Activated B cell treated with CpG ODN at 0.5 μM for 24 hours (primary cell): ENCODE measurements at regions of chr1 and their contacts with region 1.

Region 1: DNA sequence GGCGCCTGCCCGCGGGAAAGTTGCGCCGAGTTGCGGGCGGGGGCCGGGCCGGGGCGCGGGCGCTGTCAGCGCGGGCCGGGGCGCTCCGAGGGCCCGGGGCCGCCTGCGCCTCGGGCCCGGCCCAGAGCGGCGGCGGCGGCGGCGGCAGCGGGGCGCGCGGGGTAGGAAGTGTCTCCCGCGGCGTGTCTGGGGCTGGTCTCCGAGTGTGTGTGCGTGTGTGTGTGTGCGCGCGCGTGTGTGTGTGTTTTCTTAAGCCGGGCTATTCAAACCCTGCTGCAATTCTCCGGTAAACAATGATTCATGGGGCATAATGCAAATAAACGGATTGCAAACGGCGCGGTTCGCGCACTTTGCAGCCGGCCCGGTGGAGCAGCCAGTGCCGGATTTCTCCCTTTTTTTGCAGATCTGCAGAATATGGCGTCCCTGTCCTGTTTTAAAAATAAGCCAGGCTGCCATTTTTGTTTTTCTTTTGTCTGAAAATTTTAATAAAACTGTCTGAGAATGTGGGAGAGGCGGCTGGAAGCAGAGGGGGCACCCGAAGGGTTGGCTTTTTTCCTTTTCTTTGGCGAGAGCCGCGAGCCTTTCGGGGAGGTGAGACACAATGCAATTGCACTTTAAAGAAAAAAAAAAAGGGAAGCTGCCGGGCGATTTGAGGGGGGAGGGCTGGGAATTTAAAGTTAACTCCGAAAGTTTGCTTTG is 558 bp downstream of the ZNF362 start:
- DNase-seq: no peak
- ATAC-seq: peak; percentile 60
- H3K4me3 Mint-ChIP-seq: peak overlapping the region; percentile 97
- H3K27ac Mint-ChIP-seq: peak overlapping the region; percentile 95
- H3K4me1 Mint-ChIP-seq: peaks cover 34% of the 10 kb centered on the region
- H3K27me3 Mint-ChIP-seq: no peaks in the 10 kb centered on the region
- CTCF ChIP-seq: no peak

Region 2: DNA sequence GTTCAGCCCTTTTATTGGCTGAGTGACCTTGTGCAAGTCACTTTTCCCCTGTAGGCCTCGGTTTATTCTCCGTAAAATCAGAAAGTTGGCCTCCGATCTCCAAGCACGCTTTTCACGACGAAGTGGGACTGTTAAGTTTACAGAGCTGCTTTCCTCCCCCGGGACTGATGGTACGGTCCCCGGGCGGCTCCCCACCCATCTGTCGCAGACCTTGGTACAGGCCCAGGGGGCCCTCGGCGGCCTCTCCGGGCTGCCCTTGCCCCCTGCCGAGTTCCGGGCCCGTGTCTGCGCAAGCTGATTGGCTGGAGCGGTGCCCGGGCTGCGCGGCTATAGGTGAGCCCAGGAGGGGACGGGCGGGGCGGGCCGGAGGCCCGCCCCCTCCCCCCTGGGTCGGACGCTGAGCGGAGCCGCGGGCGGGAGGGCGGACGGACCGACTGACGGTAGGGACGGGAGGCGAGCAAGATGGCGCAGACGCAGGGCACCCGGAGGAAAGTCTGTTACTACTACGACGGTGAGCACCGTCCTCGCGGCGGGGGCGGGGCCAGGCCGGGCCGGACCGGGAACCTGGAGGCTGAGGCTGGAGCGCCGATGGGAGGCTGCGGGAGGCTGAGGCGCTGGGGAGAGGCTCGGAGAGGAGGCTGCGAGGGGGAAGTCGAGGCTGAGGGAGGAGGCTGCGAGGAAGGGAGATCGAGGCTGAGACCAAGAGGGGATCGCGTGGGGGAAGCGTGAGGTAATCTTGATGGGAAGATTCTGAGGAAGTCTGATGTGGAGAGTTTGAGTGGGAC is 965.0 kb before region 1 on chr1 and contains the start of gene HDAC1:
- CTCF ChIA-PET with region 1: no interaction called
- POLR2A ChIA-PET with region 1: no interaction called
- intact Hi-C with region 1: no loop called
- DNase-seq: peak; percentile 91
- ATAC-seq: peak; percentile 98
- H3K4me3 Mint-ChIP-seq: peak within 1 kb of the TSS; percentile 100
- H3K27ac Mint-ChIP-seq: peak within 1 kb of the TSS; percentile 98
- H3K4me1 Mint-ChIP-seq: peaks cover 48% of the 10 kb centered on the region
- H3K27me3 Mint-ChIP-seq: no peaks in the 10 kb centered on the region
- CTCF ChIP-seq: no peak
- total RNA-seq, gene HDAC1: 204 and 212 TPM in 2 replicates

Region 3: DNA sequence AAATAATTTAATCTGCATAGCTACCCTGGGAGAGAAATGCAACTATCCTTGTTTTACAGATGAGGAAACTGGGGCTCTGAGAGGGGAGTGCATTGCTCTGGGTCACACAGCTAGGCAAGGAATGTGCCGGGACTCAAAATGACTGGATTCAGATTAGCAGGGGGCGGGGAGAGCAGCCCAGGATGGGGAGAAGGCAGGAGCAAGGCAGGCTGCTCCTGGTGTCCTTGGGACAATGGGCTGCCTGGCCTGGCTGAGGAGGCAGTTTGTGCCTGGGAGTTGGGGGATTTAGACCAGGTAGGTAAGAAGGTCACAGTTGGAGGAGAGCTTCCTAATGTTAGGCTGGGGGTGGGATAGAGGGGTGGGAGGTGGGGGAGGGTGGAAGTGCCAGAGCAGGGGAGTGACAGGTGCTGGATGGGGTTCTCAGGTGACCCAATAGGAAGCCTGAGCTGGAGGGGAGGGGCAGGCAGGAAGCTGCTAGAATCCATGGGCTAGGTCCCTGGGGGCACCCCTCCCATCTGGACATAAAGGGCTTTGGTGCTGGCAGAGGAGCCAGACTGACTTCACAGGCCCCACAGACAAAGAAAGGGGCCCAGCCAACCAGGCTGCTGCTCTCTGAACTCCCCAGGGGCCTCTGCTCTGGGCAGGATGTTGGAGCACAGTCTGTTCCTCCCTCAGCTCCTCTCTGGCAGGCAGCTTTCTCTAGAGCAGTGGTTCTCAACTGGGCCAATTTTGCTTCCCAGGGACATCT is 104.0 kb before region 1 on chr1:
- CTCF ChIA-PET with region 1: no interaction called
- POLR2A ChIA-PET with region 1: no interaction called
- intact Hi-C with region 1: no loop called
- DNase-seq: no peak
- ATAC-seq: peak; percentile 50
- H3K4me3 Mint-ChIP-seq: no peak overlapping the region
- H3K27ac Mint-ChIP-seq: no peak overlapping the region
- H3K4me1 Mint-ChIP-seq: peaks cover 2% of the 10 kb centered on the region
- H3K27me3 Mint-ChIP-seq: no peaks in the 10 kb centered on the region
- CTCF ChIP-seq: no peak

Region 4: GRCh38 chr1:33181921-33182341 is 74.9 kb before region 1 on chr1 and contains the start of gene TRIM62:
- CTCF ChIA-PET with region 1: no interaction called
- POLR2A ChIA-PET with region 1: interaction called, 6 read pairs
- intact Hi-C with region 1: loop called (anchors 2 kb)
- DNase-seq: peak; percentile 80
- ATAC-seq: peak; percentile 67
- H3K4me3 Mint-ChIP-seq: peak within 1 kb of the TSS; percentile 89
- H3K27ac Mint-ChIP-seq: peak within 1 kb of the TSS; percentile 79
- H3K4me1 Mint-ChIP-seq: peaks cover 21% of the 10 kb centered on the region
- H3K27me3 Mint-ChIP-seq: peaks cover 9% of the 10 kb centered on the region
- CTCF ChIP-seq: no peak
- total RNA-seq, gene TRIM62: 10.1 and 10.9 TPM in 2 replicates

Region 5: GRCh38 chr1:33306648-33307493 is 50.0 kb after region 1 on chr1:
- CTCF ChIA-PET with region 1: no interaction called
- POLR2A ChIA-PET with region 1: no interaction called
- intact Hi-C with region 1: no loop called
- DNase-seq: no peak
- ATAC-seq: no peak
- H3K4me3 Mint-ChIP-seq: no peak overlapping the region
- H3K27ac Mint-ChIP-seq: no peak overlapping the region
- H3K4me1 Mint-ChIP-seq: peaks cover 4% of the 10 kb centered on the region
- H3K27me3 Mint-ChIP-seq: peaks cover 18% of the 10 kb centered on the region
- CTCF ChIP-seq: no peak

Region 6: GRCh38 chr1:33338440-33339211 is 81.8 kb after region 1 on chr1:
- CTCF ChIA-PET with region 1: no interaction called
- POLR2A ChIA-PET with region 1: no interaction called
- intact Hi-C with region 1: no loop called
- DNase-seq: no peak
- ATAC-seq: no peak
- H3K4me3 Mint-ChIP-seq: no peak overlapping the region
- H3K27ac Mint-ChIP-seq: no peak overlapping the region
- H3K4me1 Mint-ChIP-seq: peaks cover 18% of the 10 kb centered on the region
- H3K27me3 Mint-ChIP-seq: no peaks in the 10 kb centered on the region
- CTCF ChIP-seq: no peak